ENCODE measurements at regions of chr5 and their contacts with region 1.

Region 1: DNA sequence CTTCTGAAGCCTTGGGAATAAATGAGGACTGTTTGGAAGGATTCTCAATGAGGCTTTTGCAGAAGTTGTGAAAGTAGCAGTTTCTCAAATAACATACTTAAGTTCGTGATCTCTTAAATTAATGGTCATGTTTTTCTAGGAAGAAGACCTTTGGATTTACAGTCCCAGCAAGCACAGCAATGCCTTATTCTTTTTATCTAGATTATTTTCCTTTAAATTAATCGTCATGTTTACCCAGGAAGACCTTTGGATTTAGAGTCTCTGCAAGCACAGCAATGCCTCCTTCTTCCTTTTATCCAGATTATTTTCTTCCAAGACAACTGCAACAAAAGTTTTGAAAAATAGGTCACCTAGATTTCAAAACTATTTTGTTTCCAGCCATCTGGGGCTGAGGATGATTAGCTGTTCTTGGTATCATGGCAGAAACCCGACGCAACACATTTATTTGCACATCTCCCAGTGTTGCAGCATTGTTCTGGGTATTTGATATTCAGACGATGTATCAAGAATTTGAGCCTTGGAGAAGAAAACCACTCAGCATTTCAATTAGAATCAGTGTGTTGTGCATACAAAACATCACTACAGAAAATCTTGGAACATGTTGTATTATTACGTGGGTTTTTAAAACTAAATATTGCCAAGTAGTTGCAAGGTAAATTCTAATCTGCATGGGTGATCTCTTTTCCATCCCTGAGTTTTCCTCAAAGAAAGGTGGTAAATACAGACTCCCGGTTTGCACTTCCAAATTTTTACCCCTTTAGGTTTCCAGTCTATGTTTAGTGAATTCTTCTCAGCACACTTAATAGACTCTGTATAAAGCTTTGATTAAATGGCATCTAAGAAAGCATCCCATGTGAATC is 50.9 kb downstream of the JAKMIP2 start:
- DNase-seq: no peak
- H3K4me3 ChIP-seq: no peak overlapping the region
- H3K27ac ChIP-seq: no peak overlapping the region
- H3K4me1 ChIP-seq: peaks cover 19% of the 10 kb centered on the region
- H3K27me3 ChIP-seq: no peaks in the 10 kb centered on the region
- CTCF ChIP-seq: no peak

Region 2: DNA sequence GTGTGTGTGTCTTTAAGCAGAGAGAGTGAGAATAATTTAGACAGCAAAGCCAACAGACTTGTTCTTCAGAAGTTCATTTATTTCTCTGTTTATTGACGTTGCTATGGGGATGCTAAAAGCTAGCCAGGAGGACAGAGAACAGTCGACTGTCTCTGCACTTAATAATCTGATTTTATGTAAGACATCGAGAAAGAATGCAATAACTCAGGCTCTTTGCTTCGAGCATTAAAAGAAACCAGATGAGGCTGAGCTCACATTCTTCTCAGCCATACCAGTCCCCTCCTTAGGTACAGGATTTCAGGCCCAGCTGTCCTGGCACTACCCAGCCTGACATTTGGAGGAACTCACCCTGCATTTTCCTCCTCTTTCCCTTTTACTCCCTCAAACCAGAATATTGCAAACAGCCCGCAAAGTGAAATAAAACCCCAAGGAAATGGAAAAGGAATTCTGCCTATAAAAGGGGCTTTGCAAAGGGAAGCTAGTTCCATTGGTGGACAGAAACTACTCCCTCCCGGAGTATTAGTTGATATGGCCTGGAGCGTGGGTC is 177.3 kb before region 1 on chr5:
- CTCF ChIA-PET with region 1: no interaction called
- POLR2A ChIA-PET with region 1: no interaction called
- intact Hi-C with region 1: no loop called
- DNase-seq: no peak
- H3K4me3 ChIP-seq: no peak overlapping the region
- H3K27ac ChIP-seq: no peak overlapping the region
- H3K4me1 ChIP-seq: peaks cover 4% of the 10 kb centered on the region
- H3K27me3 ChIP-seq: no peaks in the 10 kb centered on the region
- CTCF ChIP-seq: no peak

Region 3: DNA sequence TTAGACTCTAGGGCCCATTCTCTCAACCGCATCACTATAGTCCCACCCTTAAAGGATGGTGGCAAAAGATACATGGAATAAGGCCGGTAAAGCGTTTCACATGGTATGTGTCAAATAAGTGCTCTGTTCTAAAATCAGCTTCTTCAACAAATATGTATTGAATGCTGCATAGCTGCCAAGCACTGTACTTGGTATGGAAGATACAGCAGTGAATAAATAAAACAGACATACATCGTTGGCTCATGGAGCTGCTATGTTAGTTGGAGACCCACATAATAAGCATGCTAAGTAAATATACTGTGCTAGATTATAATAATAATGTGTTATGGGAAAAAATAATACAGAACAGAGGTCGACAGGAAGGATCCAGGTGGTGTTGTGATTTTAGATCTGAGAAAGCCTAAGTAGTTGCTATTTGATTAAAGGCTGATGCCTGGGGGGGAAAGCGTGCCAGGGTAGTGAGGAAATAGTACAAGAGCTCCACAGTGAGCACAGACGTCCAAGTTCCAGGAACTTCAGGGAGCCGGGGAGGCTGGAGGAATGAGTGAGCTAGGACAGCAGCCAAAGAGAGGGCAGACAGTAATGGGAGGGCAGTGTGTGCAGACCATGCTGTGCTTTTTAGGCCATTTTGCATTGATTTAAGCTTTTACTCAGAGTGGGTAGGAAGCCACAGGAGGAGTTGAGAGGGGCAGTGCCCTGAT is 42.9 kb before region 1 on chr5:
- CTCF ChIA-PET with region 1: no interaction called
- POLR2A ChIA-PET with region 1: no interaction called
- intact Hi-C with region 1: loop called (anchors 1 kb)
- DNase-seq: no peak
- H3K4me3 ChIP-seq: no peak overlapping the region
- H3K27ac ChIP-seq: peak overlapping the region; percentile 49
- H3K4me1 ChIP-seq: peaks cover 58% of the 10 kb centered on the region
- H3K27me3 ChIP-seq: no peaks in the 10 kb centered on the region
- CTCF ChIP-seq: no peak

Region 4: GRCh38 chr5:148791334-148791667 is 1059.6 kb after region 1 on chr5:
- CTCF ChIA-PET with region 1: no interaction called
- POLR2A ChIA-PET with region 1: no interaction called
- intact Hi-C with region 1: no loop called
- DNase-seq: no peak
- H3K4me3 ChIP-seq: no peak overlapping the region
- H3K27ac ChIP-seq: no peak overlapping the region
- H3K4me1 ChIP-seq: no peaks in the 10 kb centered on the region
- H3K27me3 ChIP-seq: peaks cover 3% of the 10 kb centered on the region
- CTCF ChIP-seq: no peak

Measured in A673 (cell line).